ENCODE measurements at regions of chr4 and their contacts with region 1.

Region 1: GRCh38 chr4:112765317-112765975 is 128.5 kb downstream of the LARP7 start:
- DNase-seq: no peak
- H3K4me3 ChIP-seq: no peak overlapping the region
- H3K27ac ChIP-seq: no peak overlapping the region
- H3K4me1 ChIP-seq: no peaks in the 10 kb centered on the region
- H3K27me3 ChIP-seq: no peaks in the 10 kb centered on the region
- CTCF ChIP-seq: peak in 2 of 3 experiments; percentile 22 to 48

Region 2: DNA sequence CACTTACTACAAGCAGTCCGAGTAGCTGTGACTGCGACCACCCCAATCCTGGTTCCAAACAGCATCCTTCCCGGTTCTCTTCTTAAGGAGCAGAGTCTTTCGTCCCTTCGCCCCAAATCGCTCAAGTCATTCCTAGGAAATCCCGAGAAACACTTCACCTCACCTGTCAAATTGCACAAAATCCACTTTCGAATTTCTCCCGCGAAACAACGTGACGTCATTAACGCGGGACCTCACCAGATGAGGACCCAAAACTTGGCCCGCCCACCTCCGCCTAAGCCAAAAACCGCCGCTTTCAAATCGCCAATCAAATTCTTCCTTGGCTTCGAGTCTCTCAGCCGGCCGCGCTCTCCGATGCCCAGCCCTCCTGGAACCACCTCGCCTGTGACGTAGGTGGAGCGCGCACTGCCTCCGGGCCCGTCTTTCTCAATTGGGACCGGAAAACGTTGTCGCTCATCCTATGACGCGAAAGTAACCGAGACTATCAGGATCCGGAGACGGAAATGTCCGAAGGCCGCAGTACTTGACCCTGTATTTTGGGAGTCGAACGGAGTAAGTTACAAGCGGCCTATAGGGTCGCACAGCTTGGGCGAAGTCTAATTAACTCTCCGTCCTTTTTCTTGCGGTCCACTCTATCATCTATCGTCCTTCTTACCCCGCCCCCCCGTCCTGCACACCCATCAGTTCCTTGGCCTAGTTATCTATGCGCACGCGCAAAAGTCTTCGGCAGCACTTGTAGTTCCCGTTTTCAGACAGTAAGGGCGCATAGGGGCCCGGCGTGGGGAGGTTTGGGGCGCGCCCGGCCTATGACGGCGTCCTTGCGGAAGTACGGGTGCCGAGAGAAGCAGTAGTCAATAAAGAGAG is 128.5 kb before region 1 on chr4 and contains the starts of genes LARP7 and ZGRF1:
- intact Hi-C with region 1: loop called (anchors 2 kb)
- DNase-seq: peak; percentile 97 to 100
- H3K4me3 ChIP-seq: peak within 1 kb of the TSS; percentile 67 to 82
- H3K27ac ChIP-seq: peak within 1 kb of the TSS; percentile 94 to 98
- H3K4me1 ChIP-seq: peaks cover 0 to 11% of the 10 kb centered on the region in 2 donors
- H3K27me3 ChIP-seq: no peaks in the 10 kb centered on the region
- CTCF ChIP-seq: peak; percentile 97 to 100 (median 99)
- total RNA-seq, gene LARP7: 7.3 TPM
- total RNA-seq, gene ZGRF1: 0.11 TPM

Measured in ascending aorta (tissue), 2 donors.